CD8-positive, alpha-beta memory T cell (primary cell): ENCODE measurements at regions of chr7 and their contacts with region 1.

Region 1: DNA sequence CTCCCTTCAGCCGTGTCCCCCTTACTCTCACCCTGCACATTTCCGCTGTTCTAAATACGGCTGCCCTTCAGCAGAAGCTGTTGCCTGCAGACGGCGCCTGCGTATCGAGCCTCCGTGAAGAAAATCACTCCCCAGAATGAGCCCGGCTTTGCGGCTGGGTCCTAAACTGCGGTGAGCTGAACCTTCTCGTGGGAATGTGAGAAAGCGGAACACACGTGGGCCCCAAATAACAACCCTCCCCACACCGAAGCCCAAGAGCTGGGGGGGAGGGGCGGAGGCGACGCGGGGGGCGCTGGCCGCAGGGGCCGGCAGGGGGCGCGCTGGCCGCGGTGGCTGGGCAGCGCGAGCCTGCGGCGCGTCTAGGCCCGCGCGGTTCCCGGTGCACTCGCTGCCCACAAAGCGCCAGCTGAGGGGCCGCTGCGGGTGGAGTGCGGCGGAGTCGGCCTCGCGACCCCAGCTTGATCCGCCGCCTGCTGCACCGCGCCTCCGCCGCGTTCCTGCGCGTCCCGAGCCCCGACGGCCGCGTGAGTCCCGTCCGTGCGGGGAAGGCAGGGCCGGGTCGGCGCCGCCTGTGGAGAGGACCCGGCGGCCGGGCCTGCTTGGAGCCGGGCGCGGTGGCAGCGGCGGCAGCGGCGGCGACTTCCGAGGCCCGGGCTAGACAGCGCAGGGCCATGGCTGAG is at the start of gene ZNF398:
- DNase-seq: peak; percentile 70 to 86 (median 81)
- H3K4me3 ChIP-seq: peak within 1 kb of the TSS; percentile 64
- H3K4me3 Mint-ChIP-seq: peak within 1 kb of the TSS; percentile 80 to 98 (median 90)
- H3K27ac ChIP-seq: peak within 1 kb of the TSS; percentile 64
- H3K27ac Mint-ChIP-seq: peak within 1 kb of the TSS; percentile 75 to 97 (median 94)
- H3K4me1 ChIP-seq: peaks cover 16% of the 10 kb centered on the region
- H3K4me1 Mint-ChIP-seq: peaks cover 26 to 46% (median 36%) of the 10 kb centered on the region in 3 donors
- H3K27me3 ChIP-seq: no peaks in the 10 kb centered on the region
- H3K27me3 Mint-ChIP-seq: no peaks in the 10 kb centered on the region
- total RNA-seq, gene ZNF398: 15.7 to 16.4 TPM

Region 2: GRCh38 chr7:149005241-149006050 is 141.8 kb before region 1 on chr7:
- CTCF ChIA-PET with region 1: interaction called, 11 read pairs
- POLR2A ChIA-PET with region 1: interaction called, 3 read pairs
- DNase-seq: peak; percentile 64 to 88 (median 78)
- H3K4me3 ChIP-seq: no peak overlapping the region
- H3K4me3 Mint-ChIP-seq: no peak overlapping the region
- H3K27ac ChIP-seq: no peak overlapping the region
- H3K27ac Mint-ChIP-seq: peak overlapping the region in 7 of 8 donors; percentile 25 to 93 (median 85)
- H3K4me1 ChIP-seq: peaks cover 6% of the 10 kb centered on the region
- H3K4me1 Mint-ChIP-seq: peaks cover 0 to 5% (median 3%) of the 10 kb centered on the region in 3 donors
- H3K27me3 ChIP-seq: no peaks in the 10 kb centered on the region
- H3K27me3 Mint-ChIP-seq: no peaks in the 10 kb centered on the region

Region 3: DNA sequence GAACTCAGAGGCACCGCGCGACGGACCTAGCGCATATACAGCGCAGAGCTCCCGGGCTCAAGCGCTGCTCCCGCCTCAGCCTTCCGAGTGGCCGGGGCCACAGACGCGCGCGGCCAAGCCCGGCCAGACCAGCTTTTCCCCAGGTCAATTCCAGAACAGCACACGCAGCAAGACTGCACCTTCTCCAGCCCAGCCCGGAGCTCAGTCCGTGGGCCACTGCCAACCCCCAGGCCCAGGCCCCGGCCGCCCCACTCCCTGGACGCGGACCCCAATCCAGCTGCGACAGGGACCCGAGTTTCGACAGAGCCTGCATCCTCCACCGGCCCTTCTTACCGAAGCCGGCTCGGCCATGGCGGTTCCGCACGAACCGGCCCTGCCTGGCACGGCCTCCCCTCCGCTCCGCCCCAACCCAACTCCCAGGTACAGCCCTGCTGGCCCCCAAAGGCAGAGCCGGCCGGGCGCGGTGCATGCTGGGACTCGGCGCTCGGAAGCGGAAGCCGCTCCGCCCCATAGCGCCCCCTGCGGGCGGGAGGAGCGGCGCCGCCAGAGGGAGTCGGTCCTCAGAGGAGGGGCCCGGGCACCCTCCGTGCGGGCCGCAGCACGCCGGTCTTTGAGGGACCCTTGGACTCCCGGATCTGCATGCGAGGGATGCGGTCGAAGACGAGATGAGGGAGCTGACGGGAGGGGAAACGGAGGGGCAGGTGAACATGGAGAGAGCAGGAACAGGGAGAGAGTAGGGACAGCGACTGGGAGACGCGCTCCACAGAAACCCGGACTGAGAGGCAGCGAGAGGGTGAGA is 21.1 kb before region 1 on chr7 and contains the start of gene ZNF425:
- CTCF ChIA-PET with region 1: interaction called, 61 read pairs
- POLR2A ChIA-PET with region 1: interaction called, 34 read pairs
- DNase-seq: peak; percentile 89 to 94 (median 92)
- H3K4me3 ChIP-seq: peak within 1 kb of the TSS; percentile 99
- H3K4me3 Mint-ChIP-seq: peak within 1 kb of the TSS; percentile 95 to 100 (median 99)
- H3K27ac ChIP-seq: peak within 1 kb of the TSS; percentile 96
- H3K27ac Mint-ChIP-seq: peak within 1 kb of the TSS; percentile 86 to 99 (median 98)
- H3K4me1 ChIP-seq: peaks cover 14% of the 10 kb centered on the region
- H3K4me1 Mint-ChIP-seq: peaks cover 17 to 28% (median 23%) of the 10 kb centered on the region in 3 donors
- H3K27me3 ChIP-seq: no peaks in the 10 kb centered on the region
- H3K27me3 Mint-ChIP-seq: peaks cover 0 to 2% of the 10 kb centered on the region in 2 donors
- total RNA-seq, gene ZNF425: 1.4 to 1.8 TPM

Region 4: DNA sequence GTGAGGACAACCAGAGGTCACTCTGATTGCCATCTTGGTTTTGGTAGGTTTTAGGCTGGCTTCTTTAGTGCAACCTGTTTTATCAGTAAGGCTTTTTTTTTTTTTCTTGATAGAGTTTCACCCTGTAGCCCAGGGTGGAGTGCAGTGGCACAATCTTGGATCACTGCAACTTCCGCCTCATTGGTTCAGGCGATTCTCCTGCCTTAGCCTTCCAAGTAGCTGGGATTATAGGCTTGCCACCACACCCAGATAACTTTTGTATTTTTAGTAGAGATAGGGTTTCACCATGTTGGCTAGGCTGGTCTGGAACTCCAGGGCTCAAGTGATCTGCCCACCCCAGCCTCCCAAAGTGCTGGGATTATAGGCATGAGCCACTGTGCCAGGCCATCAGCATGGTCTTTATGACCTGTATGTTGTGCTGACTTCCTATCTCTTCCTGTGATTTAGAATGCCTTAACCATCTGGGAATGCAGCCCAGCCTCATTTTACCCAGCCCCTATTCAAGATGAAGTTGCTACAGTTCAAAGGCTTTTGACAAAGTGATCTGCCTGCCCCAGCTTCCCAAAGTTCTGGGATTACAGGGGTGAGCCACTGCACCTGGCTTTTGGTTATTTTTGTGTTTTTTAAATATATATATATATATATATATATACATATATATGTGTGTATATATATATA is 14.0 kb before region 1 on chr7:
- CTCF ChIA-PET with region 1: interaction called, 61 read pairs
- POLR2A ChIA-PET with region 1: interaction called, 23 read pairs
- DNase-seq: no peak
- H3K4me3 ChIP-seq: no peak overlapping the region
- H3K4me3 Mint-ChIP-seq: no peak overlapping the region
- H3K27ac ChIP-seq: no peak overlapping the region
- H3K27ac Mint-ChIP-seq: no peak overlapping the region
- H3K4me1 ChIP-seq: no peaks in the 10 kb centered on the region
- H3K4me1 Mint-ChIP-seq: peaks cover 0 to 2% (median 1%) of the 10 kb centered on the region in 3 donors
- H3K27me3 ChIP-seq: no peaks in the 10 kb centered on the region
- H3K27me3 Mint-ChIP-seq: no peaks in the 10 kb centered on the region

Region 5: GRCh38 chr7:149161241-149161848 is 14.1 kb after region 1 on chr7:
- CTCF ChIA-PET with region 1: interaction called, 10 read pairs
- POLR2A ChIA-PET with region 1: no interaction called
- DNase-seq: no peak
- H3K4me3 ChIP-seq: no peak overlapping the region
- H3K4me3 Mint-ChIP-seq: peak overlapping the region in 1 of 7 donors; percentile 6
- H3K27ac ChIP-seq: no peak overlapping the region
- H3K27ac Mint-ChIP-seq: peak overlapping the region in 4 of 8 donors; percentile 57 to 86 (median 76)
- H3K4me1 ChIP-seq: no peaks in the 10 kb centered on the region
- H3K4me1 Mint-ChIP-seq: peaks cover 6 to 24% (median 22%) of the 10 kb centered on the region in 3 donors
- H3K27me3 ChIP-seq: no peaks in the 10 kb centered on the region
- H3K27me3 Mint-ChIP-seq: no peaks in the 10 kb centered on the region

Region 6: DNA sequence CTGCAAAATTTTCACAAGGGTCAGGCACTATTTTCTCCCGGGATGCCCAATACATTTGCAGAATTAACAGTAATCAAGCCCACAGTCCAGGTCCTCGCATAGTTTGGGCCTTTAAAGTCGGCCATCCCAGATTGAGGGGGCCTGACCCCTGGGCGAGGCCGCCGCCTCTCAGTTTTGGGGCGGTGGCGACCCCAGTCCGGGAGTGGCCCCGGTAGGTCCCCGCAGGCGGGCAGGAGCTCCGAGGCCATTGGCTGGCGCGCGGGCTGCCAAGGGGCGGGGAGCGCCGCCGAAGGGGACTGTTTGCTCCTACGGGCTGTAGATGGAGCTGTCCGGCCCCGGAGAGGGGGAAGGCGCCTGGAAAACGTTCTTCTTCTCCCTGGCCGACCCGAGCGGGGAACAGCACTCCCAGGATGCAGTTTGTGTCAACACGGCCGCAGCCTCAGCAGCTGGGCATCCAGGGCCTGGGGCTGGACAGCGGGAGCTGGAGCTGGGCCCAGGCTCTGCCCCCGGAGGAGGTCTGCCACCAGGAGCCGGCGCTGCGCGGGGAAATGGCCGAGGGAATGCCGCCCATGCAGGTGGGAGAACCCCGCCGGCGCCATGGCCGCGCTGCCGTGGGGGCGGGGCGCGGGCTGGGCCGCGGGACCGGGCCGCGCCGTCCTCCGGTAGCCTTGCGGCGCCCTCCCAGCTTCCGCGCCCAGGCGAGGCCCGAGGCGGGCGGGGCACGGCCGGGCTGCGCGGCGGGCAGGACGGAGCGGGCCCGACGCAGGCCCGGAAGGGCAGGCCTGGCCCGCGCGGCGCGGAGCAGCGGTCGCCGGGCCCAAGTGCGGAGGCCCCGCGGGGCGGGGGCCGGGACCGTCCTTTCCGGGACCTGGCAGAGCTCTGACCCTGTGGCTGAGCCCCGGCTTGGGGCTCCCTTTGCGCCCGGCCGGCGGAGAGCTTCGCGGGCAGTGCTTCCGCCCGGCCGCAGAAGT is 48.3 kb after region 1 on chr7 and contains the start of gene ZNF282:
- CTCF ChIA-PET with region 1: interaction called, 12 read pairs
- POLR2A ChIA-PET with region 1: interaction called, 5 read pairs
- DNase-seq: peak; percentile 54 to 76 (median 62)
- H3K4me3 ChIP-seq: peak within 1 kb of the TSS; percentile 88
- H3K4me3 Mint-ChIP-seq: peak within 1 kb of the TSS; percentile 86 to 97 (median 90)
- H3K27ac ChIP-seq: peak within 1 kb of the TSS; percentile 89
- H3K27ac Mint-ChIP-seq: peak within 1 kb of the TSS; percentile 75 to 94 (median 90)
- H3K4me1 ChIP-seq: peaks cover 16% of the 10 kb centered on the region
- H3K4me1 Mint-ChIP-seq: peaks cover 31 to 51% (median 37%) of the 10 kb centered on the region in 3 donors
- H3K27me3 ChIP-seq: no peaks in the 10 kb centered on the region
- H3K27me3 Mint-ChIP-seq: no peaks in the 10 kb centered on the region
- total RNA-seq, gene ZNF282: 35.8 to 36.6 TPM

Region 7: DNA sequence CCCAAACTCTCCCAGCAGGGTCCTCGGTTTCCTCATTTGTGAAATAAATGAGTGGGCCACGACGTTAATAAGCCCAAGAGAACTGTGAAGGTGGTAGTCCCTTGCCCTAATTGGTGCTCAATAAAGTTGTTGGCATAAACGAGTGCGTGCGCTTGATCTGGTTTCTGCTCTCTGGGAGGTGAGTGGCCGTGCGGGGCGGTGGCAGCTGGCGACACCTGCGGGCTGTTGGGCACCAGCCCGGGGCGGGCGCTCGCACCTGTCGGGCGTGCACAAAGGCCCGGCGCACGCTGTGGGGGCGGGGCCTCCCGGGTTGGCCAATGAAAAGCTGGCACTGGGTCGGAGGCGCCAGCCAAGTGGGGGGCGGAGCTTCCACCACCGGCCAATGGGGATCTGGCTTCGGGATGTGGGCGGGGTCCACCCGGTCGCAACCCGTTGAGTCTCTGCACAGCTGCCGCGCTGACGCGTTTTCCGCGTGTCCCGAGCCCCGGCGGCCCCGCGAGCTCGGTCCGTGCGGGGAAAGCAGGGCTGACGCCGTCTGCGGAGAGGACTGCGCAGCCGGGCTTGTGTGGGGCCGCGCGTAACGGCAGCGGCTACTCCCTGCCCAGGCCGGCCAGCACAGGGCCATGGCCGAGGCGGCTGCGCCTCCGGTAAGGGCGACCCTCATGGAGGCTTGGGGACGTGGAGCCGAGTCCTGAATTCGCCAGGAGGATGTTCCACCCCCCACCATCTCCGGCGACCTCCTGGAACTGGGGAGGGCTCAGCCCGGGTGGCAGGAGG is 137.8 kb after region 1 on chr7:
- CTCF ChIA-PET with region 1: interaction called, 10 read pairs
- POLR2A ChIA-PET with region 1: no interaction called
- DNase-seq: peak; percentile 97 to 99 (median 98)
- H3K4me3 ChIP-seq: peak overlapping the region; percentile 62
- H3K4me3 Mint-ChIP-seq: peak overlapping the region; percentile 84 to 93 (median 87)
- H3K27ac ChIP-seq: peak overlapping the region; percentile 38
- H3K27ac Mint-ChIP-seq: peak overlapping the region; percentile 54 to 92 (median 86)
- H3K4me1 ChIP-seq: peaks cover 34% of the 10 kb centered on the region
- H3K4me1 Mint-ChIP-seq: peaks cover 37 to 52% (median 41%) of the 10 kb centered on the region in 3 donors
- H3K27me3 ChIP-seq: no peaks in the 10 kb centered on the region
- H3K27me3 Mint-ChIP-seq: no peaks in the 10 kb centered on the region